CD4-positive, alpha-beta T cell (primary cell): ENCODE measurements at regions of chr1 and their contacts with region 1.

Region 1: GRCh38 chr1:25616095-25616986 is at the start of gene MAN1C1:
- DNase-seq: peak; percentile 69 to 95 (median 81)
- ATAC-seq: peak; percentile 56
- H3K4me3 ChIP-seq: peak within 1 kb of the TSS; percentile 73
- H3K4me3 Mint-ChIP-seq: peak within 1 kb of the TSS; percentile 90
- H3K27ac ChIP-seq: peak within 1 kb of the TSS; percentile 27 to 84
- H3K27ac Mint-ChIP-seq: peak within 1 kb of the TSS; percentile 93
- H3K4me1 ChIP-seq: peaks cover 55% of the 10 kb centered on the region
- H3K4me1 Mint-ChIP-seq: peaks cover 50% of the 10 kb centered on the region
- H3K27me3 ChIP-seq: no peaks in the 10 kb centered on the region
- H3K27me3 Mint-ChIP-seq: no peaks in the 10 kb centered on the region
- CTCF ChIP-seq: peak; percentile 49
- total RNA-seq, gene MAN1C1: 44.4 to 46.9 TPM

Region 2: GRCh38 chr1:25572708-25573600 is 43.4 kb before region 1 on chr1:
- CTCF ChIA-PET with region 1: interaction called, 12 read pairs
- POLR2A ChIA-PET with region 1: interaction called, 16 read pairs
- intact Hi-C with region 1: no loop called
- DNase-seq: peak in 13 of 14 experiments; percentile 31 to 73 (median 42)
- ATAC-seq: peak; percentile 82
- H3K4me3 ChIP-seq: no peak overlapping the region
- H3K4me3 Mint-ChIP-seq: no peak overlapping the region
- H3K27ac ChIP-seq: peak overlapping the region in 1 of 2 donors; percentile 8
- H3K27ac Mint-ChIP-seq: peak overlapping the region; percentile 87
- H3K4me1 ChIP-seq: peaks cover 58% of the 10 kb centered on the region
- H3K4me1 Mint-ChIP-seq: peaks cover 55% of the 10 kb centered on the region
- H3K27me3 ChIP-seq: no peaks in the 10 kb centered on the region
- H3K27me3 Mint-ChIP-seq: no peaks in the 10 kb centered on the region
- CTCF ChIP-seq: peak; percentile 73

Region 3: GRCh38 chr1:25642574-25643108 is 26.3 kb after region 1 on chr1:
- CTCF ChIA-PET with region 1: interaction called, 28 read pairs
- POLR2A ChIA-PET with region 1: interaction called, 59 read pairs
- intact Hi-C with region 1: loop called (anchors 1 kb)
- DNase-seq: peak; percentile 55 to 90 (median 70)
- ATAC-seq: peak; percentile 89
- H3K4me3 ChIP-seq: peak overlapping the region; percentile 36
- H3K4me3 Mint-ChIP-seq: peak overlapping the region; percentile 82
- H3K27ac ChIP-seq: peak overlapping the region; percentile 68 to 72
- H3K27ac Mint-ChIP-seq: peak overlapping the region; percentile 89
- H3K4me1 ChIP-seq: peaks cover 60% of the 10 kb centered on the region
- H3K4me1 Mint-ChIP-seq: peaks cover 90% of the 10 kb centered on the region
- H3K27me3 ChIP-seq: no peaks in the 10 kb centered on the region
- H3K27me3 Mint-ChIP-seq: no peaks in the 10 kb centered on the region
- CTCF ChIP-seq: no peak

Region 4: GRCh38 chr1:25675729-25676476 is 59.6 kb after region 1 on chr1:
- CTCF ChIA-PET with region 1: interaction called, 21 read pairs
- POLR2A ChIA-PET with region 1: interaction called, 64 read pairs
- intact Hi-C with region 1: loop called in 1 of 2 experiments (anchors 5 kb)
- DNase-seq: peak; percentile 41 to 90 (median 66)
- ATAC-seq: peak; percentile 80
- H3K4me3 ChIP-seq: peak overlapping the region; percentile 37
- H3K4me3 Mint-ChIP-seq: peak overlapping the region; percentile 83
- H3K27ac ChIP-seq: peak overlapping the region; percentile 53 to 63
- H3K27ac Mint-ChIP-seq: peak overlapping the region; percentile 96
- H3K4me1 ChIP-seq: peaks cover 63% of the 10 kb centered on the region
- H3K4me1 Mint-ChIP-seq: peaks cover 94% of the 10 kb centered on the region
- H3K27me3 ChIP-seq: no peaks in the 10 kb centered on the region
- H3K27me3 Mint-ChIP-seq: no peaks in the 10 kb centered on the region
- CTCF ChIP-seq: no peak

Region 5: GRCh38 chr1:25796811-25797458 is 180.6 kb after region 1 on chr1:
- CTCF ChIA-PET with region 1: no interaction called
- POLR2A ChIA-PET with region 1: interaction called, 8 read pairs
- intact Hi-C with region 1: loop called (anchors 1 to 2 kb)
- DNase-seq: peak; percentile 75 to 92 (median 82)
- ATAC-seq: peak; percentile 65
- H3K4me3 ChIP-seq: no peak overlapping the region
- H3K4me3 Mint-ChIP-seq: peak overlapping the region; percentile 85
- H3K27ac ChIP-seq: peak overlapping the region; percentile 44 to 47
- H3K27ac Mint-ChIP-seq: peak overlapping the region; percentile 89
- H3K4me1 ChIP-seq: peaks cover 67% of the 10 kb centered on the region
- H3K4me1 Mint-ChIP-seq: peaks cover 67% of the 10 kb centered on the region
- H3K27me3 ChIP-seq: no peaks in the 10 kb centered on the region
- H3K27me3 Mint-ChIP-seq: no peaks in the 10 kb centered on the region
- CTCF ChIP-seq: peak; percentile 75